Mammary epithelial cell (primary cell): ENCODE measurements at regions of chr3 and their contacts with region 1.

Region 1: GRCh38 chr3:134373994-134374790 is at the start of gene AMOTL2:
- DNase-seq: peak; percentile 94
- H3K4me3 ChIP-seq: peak within 1 kb of the TSS; percentile 76 to 84 (median 79)
- H3K27ac ChIP-seq: peak within 1 kb of the TSS; percentile 80
- H3K4me1 ChIP-seq: peaks cover 60% of the 10 kb centered on the region
- H3K27me3 ChIP-seq: no peaks in the 10 kb centered on the region
- CTCF ChIP-seq: no peak
- total RNA-seq, gene AMOTL2: 116 to 144 TPM

Region 2: DNA sequence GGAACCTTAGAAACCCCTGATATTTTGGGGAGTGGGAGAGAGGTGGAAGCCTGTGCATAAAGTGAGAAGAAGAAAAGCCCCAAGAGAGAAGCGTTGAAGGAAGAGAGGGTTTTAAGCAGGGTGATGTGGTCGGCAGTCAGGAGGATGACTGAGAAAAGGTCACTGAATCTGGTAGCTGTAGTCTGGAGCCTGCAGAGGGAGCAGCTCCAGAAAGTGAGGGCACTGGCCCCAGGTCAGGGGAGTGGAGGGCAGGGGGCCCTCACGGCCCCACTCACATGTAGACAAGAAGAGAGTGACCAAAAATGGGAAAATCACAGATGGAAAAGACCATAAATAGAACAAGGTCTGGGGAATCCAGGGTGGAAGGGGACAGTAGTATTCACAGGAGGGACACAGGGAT is 229.0 kb before region 1 on chr3:
- CTCF ChIA-PET with region 1: no interaction called
- dilution Hi-C with region 1: no loop called
- in situ Hi-C with region 1: no loop called
- intact Hi-C with region 1: no loop called
- DNase-seq: no peak
- H3K4me3 ChIP-seq: no peak overlapping the region
- H3K27ac ChIP-seq: no peak overlapping the region
- H3K4me1 ChIP-seq: peaks cover 10% of the 10 kb centered on the region
- H3K27me3 ChIP-seq: no peaks in the 10 kb centered on the region
- CTCF ChIP-seq: no peak

Region 3: DNA sequence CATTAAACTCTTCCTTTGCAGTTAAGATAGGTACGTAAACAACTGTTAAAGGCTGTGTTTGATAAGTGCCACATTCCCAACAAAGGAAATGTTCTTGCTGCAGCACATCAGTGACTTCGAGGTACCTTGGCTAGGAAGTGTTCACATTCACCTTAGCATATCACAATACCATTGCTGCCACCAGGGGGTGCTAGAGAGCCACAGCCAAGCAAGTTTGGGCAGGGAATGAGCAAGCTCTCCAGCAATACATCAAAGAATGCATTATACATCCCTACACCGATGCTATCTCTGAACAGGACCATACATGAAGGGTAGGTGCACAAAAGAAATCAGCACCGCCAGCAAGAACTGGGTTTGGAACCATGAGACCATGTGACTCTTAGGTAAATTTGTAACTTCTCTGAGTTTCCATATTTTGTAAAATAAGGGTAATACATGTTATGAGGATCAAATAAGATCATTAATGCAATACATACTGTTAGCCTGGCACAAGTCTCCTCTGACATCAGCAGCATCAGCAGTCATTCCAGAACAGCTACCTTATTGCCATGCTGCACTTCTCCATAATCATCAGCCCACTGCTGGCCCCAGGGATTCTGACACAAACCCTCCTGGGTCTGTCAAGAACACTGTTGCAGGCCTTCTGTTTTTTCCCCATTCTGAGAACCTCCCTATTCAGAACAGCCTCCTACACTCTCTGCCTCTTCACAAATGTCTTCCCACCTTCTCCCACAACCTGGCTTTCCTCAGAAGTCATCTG is 161.1 kb before region 1 on chr3:
- CTCF ChIA-PET with region 1: interaction called, 6 read pairs
- dilution Hi-C with region 1: no loop called
- in situ Hi-C with region 1: no loop called
- intact Hi-C with region 1: loop called (anchors 5 kb)
- DNase-seq: peak; percentile 83
- H3K4me3 ChIP-seq: no peak overlapping the region
- H3K27ac ChIP-seq: no peak overlapping the region
- H3K4me1 ChIP-seq: peaks cover 33% of the 10 kb centered on the region
- H3K27me3 ChIP-seq: no peaks in the 10 kb centered on the region
- CTCF ChIP-seq: peak; percentile 99 to 100

Region 4: DNA sequence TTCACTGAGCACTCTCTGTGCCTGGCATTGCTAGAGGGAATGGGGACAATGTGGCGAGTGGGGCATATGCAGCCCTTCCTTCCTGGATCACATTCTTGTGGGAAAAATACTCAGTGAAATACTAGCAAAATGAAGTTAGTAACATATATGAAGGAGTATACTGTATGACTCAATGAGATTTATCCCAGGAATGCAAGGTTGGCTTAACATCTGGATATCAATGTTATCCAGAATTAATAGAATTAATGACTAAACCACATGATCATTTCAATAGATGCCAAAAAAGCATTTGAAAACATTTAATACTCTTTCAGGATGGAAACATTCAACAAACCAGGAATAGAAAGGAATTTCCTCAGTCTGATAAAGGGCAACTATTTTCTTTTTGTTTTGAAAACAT is 27.4 kb before region 1 on chr3:
- CTCF ChIA-PET with region 1: no interaction called
- dilution Hi-C with region 1: no loop called
- in situ Hi-C with region 1: no loop called
- intact Hi-C with region 1: no loop called
- DNase-seq: no peak
- H3K4me3 ChIP-seq: no peak overlapping the region
- H3K27ac ChIP-seq: no peak overlapping the region
- H3K4me1 ChIP-seq: peaks cover 29% of the 10 kb centered on the region
- H3K27me3 ChIP-seq: no peaks in the 10 kb centered on the region
- CTCF ChIP-seq: no peak

Region 5: GRCh38 chr3:134357261-134358184 is 16.7 kb before region 1 on chr3:
- CTCF ChIA-PET with region 1: no interaction called
- dilution Hi-C with region 1: no loop called
- in situ Hi-C with region 1: no loop called
- intact Hi-C with region 1: loop called (anchors 2 kb)
- DNase-seq: peak; percentile 82
- H3K4me3 ChIP-seq: no peak overlapping the region
- H3K27ac ChIP-seq: peak overlapping the region; percentile 43
- H3K4me1 ChIP-seq: peaks cover 70% of the 10 kb centered on the region
- H3K27me3 ChIP-seq: no peaks in the 10 kb centered on the region
- CTCF ChIP-seq: no peak

Region 6: GRCh38 chr3:134449277-134449676 is 75.1 kb after region 1 on chr3:
- CTCF ChIA-PET with region 1: no interaction called
- dilution Hi-C with region 1: no loop called
- in situ Hi-C with region 1: no loop called
- intact Hi-C with region 1: loop called (anchors 1 kb)
- DNase-seq: peak; percentile 45
- H3K4me3 ChIP-seq: no peak overlapping the region
- H3K27ac ChIP-seq: no peak overlapping the region
- H3K4me1 ChIP-seq: peaks cover 26% of the 10 kb centered on the region
- H3K27me3 ChIP-seq: no peaks in the 10 kb centered on the region
- CTCF ChIP-seq: peak; percentile 73 to 84

Region 7: DNA sequence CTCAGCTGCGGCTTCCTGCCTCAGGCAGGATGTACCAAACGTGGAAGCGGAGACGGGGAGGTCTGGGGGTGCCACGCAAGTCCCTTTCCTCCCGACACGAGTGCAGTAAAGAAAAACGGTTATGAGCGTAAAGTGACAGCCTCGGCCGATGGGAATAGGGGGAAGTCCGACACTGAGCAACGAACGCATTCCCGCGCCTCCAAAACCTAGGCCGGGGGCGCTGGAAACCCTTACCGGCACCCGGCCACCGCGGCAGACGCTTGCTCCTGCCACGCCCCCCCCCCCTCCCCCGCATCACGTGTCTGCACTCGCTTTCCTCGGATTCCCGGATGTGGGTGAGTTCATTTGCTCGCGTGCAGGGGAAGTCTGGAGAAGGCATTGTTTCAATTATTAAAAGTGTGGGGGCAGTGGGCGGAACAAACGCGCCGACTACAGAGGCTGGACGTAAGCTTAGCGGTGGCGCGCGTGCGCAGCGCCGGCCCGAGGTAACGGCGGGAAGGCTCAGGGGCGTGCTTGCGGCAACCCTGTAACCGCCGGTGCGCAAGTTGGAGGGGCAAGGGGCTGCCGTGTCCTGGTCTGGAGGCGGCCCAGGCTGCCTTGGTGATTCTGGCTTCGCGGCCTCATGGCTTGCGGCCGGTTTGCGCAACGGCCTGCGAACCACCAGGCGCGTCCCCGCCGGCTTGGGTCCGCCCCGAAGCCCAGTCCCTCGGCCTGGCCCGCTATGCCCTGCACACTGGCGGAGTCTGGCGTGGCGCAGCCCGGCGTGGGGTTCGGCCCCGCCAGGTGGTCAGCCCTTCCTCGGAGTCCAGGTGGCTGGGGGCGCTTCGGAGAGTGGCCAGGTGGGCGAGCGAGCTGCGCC is 111.8 kb after region 1 on chr3 and contains the starts of genes ANAPC13 and CEP63:
- CTCF ChIA-PET with region 1: no interaction called
- dilution Hi-C with region 1: loop called (anchors 5 kb)
- in situ Hi-C with region 1: no loop called
- intact Hi-C with region 1: no loop called
- DNase-seq: peak; percentile 98
- H3K4me3 ChIP-seq: peak within 1 kb of the TSS; percentile 70 to 90 (median 76)
- H3K27ac ChIP-seq: peak within 1 kb of the TSS; percentile 87
- H3K4me1 ChIP-seq: peaks cover 38% of the 10 kb centered on the region
- H3K27me3 ChIP-seq: no peaks in the 10 kb centered on the region
- CTCF ChIP-seq: no peak
- total RNA-seq, gene ANAPC13: 32.2 to 40.5 TPM
- total RNA-seq, gene CEP63: 7.2 to 25.3 TPM